Psoas muscle (tissue), 8 donors: ENCODE measurements at regions of chr3 and their contacts with region 1.

Region 1: DNA sequence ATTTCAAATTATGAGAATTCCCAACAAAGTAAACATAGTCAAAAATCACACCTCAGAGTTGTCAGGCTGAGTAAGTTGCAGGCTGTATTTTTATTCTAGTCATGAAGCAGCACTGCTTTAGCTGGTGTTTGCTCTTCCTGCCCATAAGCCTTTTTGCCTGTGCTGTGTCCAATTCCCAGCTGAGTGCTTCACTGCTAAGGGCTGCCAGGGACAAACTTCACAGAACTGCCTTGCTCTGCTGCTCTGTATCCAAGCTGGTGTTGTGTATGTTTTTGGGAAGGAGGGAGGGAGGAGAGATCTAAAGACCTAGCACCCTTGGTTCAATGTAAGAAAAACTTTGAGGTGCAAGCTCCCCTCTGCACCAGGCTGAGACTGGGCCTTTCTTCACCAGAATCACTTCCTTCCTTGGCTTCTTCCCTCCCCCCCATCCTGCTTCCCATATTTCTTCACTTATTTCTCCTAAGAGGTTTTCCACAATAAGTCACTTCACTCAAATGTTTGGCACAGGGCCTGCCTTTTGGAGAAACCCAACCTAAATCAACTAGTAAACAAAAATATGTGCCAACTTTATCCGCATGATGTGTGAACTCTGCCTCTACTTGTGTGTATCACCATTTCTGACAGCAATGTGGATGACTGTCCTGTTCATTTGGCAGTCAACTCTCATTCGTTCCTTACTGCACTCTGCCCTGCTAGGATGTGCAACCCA is 156.1 kb downstream of the TBL1XR1 start:
- DNase-seq: peak in 1 of 2 donors; percentile 21
- ATAC-seq: peak; percentile 71 to 85 (median 78)
- H3K4me3 ChIP-seq: no peak overlapping the region
- H3K27ac ChIP-seq: peak overlapping the region; percentile 67
- H3K4me1 ChIP-seq: peaks cover 31% of the 10 kb centered on the region
- H3K27me3 ChIP-seq: no peaks in the 10 kb centered on the region
- CTCF ChIP-seq: no peak

Region 2: GRCh38 chr3:177777699-177778098 is 736.5 kb after region 1 on chr3:
- intact Hi-C with region 1: loop called (anchors 5 to 10 kb)
- DNase-seq: peak; percentile 39 to 71
- ATAC-seq: peak; percentile 84 to 95 (median 89)
- H3K4me3 ChIP-seq: no peak overlapping the region
- H3K27ac ChIP-seq: no peak overlapping the region
- H3K4me1 ChIP-seq: peaks cover 16% of the 10 kb centered on the region
- H3K27me3 ChIP-seq: no peaks in the 10 kb centered on the region
- CTCF ChIP-seq: peak; percentile 77